GM12878 (cell line): ENCODE measurements at regions of chr2 and their contacts with region 1.

Region 1: DNA sequence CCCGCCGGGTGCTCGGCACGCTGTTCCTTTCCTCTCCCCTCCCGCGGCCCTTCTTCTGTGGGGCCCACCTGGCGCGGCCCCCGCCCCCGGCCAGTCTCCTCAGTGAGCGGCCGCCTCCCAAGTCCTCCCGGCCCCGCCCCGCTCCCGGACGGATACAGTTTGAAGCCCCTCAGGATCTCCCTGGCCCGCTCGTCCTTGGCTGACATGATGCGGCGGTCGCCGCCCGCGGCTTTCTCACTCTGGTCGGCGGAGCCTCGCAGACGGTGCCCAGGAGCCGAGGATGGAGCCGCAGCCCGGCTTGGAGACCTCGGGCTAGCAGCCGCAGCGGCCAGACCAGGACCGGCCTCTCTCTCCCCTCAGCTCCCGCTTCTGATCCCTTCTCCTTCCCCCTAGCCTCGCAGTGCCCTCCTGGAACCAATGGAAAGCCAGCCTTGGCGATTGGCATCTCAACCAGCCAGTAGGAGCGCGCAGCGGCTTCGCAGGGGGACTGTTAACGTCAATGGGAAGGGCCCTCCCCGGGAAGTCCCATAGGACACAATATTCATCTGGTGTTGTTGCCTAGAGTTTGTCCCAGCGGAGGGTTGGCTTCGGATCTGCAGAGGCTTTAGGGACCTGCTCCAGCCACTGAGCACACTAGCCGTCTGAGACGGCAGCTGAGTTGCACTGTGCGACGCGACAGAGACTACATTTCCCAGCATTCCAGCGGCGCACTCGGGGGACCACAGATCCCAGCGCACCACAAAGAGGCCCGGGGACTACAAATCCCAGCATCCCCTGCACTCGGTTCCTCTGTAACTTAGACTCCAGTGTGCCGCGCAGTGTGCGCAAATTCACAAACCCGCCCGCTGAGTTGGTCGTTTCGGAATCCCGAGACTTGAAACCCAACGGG is at the start of gene PDE6D:
- DNase-seq: peak; percentile 97
- ATAC-seq: peak; percentile 94
- H3K4me3 ChIP-seq: peak within 1 kb of the TSS; percentile 91
- H3K27ac ChIP-seq: peak within 1 kb of the TSS; percentile 78
- H3K4me1 ChIP-seq: peaks cover 10% of the 10 kb centered on the region
- H3K27me3 ChIP-seq: no peaks in the 10 kb centered on the region
- CTCF ChIP-seq: no peak
- EP300 ChIP-seq: peak; percentile 22 to 55; a peak in 2 of 4 replicates
- POLR2A ChIP-seq: peak; percentile 93
- RAD21 ChIP-seq: no peak
- polyA plus RNA-seq, gene PDE6D: 8.2 to 15.9 TPM

Region 2: DNA sequence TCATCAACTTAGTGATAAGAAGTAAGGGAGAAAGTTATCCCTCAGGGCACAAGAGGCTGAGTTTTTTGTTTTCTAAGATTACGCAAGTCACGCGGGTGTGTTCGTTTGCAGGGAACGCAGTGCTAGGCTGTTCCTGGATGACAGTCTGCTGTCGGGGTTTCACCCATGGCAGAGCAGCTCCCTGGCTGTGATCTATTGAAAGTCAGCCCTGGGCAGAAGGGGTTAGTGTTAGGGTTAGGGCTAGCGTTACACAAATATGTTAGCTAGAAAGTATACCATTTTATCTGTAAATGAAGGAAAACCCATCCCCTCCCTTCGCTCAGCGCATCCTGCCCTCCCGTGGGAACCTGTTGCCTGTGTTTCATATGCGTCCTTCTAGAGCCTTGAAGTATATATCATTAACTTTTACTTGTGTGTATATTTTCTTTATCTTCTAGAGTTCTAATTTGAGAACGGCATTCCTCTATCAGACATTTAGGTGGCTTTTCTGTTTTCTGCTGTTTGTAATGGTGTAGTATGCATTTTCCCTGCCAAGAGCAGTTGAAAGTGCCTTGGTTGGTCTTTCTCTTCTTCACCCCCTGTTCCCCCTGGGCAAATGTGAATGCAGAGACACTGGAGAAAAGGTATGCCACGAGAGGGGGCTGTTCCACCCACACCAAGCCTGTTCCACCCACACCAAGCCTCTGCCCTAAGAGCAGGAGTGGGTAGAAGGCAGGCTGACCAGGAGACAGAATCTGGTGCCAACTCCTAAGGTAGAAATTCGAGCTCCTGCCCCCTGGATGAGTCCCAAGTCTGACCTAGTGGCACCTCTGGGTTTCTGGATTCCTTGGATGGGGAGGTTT is 535.7 kb before region 1 on chr2:
- CTCF ChIA-PET with region 1: no interaction called
- POLR2A ChIA-PET with region 1: no interaction called
- RAD21 ChIA-PET with region 1: no interaction called
- SMC1A ChIA-PET with region 1: no interaction called
- in situ Hi-C with region 1: no loop called
- intact Hi-C with region 1: no loop called
- DNase-seq: no peak
- ATAC-seq: peak; percentile 85
- H3K4me3 ChIP-seq: no peak overlapping the region
- H3K27ac ChIP-seq: no peak overlapping the region
- H3K4me1 ChIP-seq: no peaks in the 10 kb centered on the region
- H3K27me3 ChIP-seq: no peaks in the 10 kb centered on the region
- CTCF ChIP-seq: peak in 2 of 3 experiments; percentile 31 to 48; a peak in 3 of 6 replicates
- EP300 ChIP-seq: no peak
- POLR2A ChIP-seq: no peak
- RAD21 ChIP-seq: peak; percentile 30; the same call in 1 of the 2 replicates

Region 3: DNA sequence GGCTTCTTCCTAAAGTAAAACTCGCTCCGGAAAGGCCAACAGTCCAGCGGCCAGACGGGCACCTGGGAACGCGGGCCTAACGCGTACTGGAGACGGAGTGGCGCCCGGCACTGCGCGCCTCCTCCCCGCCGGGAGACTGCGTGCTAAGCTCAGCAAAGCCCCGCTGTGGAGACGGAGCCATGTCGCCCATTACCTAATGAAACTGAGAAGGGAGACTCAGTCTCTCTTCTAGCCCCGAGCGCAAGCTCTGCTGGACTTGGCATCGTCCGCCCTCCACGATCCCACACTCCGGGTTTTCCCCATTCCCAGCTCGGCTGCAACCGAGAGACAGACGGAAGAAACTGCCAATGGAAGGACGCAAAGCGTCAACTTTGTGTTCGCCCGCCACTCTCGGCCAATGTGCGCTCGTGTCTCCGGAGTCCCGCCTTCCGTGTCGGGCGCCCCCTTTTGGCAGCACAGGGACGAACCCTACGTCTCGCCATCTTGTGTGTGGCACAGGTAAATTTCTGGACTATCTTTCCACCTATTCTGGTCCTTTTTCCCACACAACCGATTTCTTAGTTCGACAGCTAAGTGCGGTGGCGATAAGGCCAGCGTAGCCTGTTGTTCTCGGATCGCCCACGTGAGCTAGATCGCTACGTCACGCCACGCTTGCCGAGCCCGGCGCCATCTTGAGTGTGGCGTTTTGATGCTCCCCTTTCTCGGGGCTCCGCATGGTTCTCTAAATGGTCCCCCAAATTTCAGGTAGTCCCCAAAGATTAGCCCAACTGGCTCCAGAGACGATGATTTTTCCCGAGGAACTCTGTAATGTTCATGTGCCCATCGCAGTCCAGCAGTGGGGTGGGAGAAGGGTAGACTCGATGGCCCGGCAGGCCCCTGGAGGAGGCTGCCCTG is 74.2 kb before region 1 on chr2:
- CTCF ChIA-PET with region 1: interaction called, 4 read pairs
- POLR2A ChIA-PET with region 1: interaction called, 4 read pairs
- RAD21 ChIA-PET with region 1: interaction called, 3 read pairs
- SMC1A ChIA-PET with region 1: interaction called, 4 read pairs
- in situ Hi-C with region 1: no loop called
- intact Hi-C with region 1: loop called (anchors 1 kb)
- DNase-seq: peak; percentile 95
- ATAC-seq: peak; percentile 61
- H3K4me3 ChIP-seq: peak overlapping the region; percentile 91
- H3K27ac ChIP-seq: peak overlapping the region; percentile 100
- H3K4me1 ChIP-seq: peaks cover 14% of the 10 kb centered on the region
- H3K27me3 ChIP-seq: no peaks in the 10 kb centered on the region
- CTCF ChIP-seq: peak; percentile 91 to 99 (median 99); a peak in 5 of 6 replicates
- EP300 ChIP-seq: no peak
- POLR2A ChIP-seq: no peak
- RAD21 ChIP-seq: no peak

Region 4: GRCh38 chr2:231720987-231721966 is 59.9 kb before region 1 on chr2:
- CTCF ChIA-PET with region 1: no interaction called
- POLR2A ChIA-PET with region 1: interaction called, 7 read pairs
- RAD21 ChIA-PET with region 1: interaction called, 10 read pairs
- SMC1A ChIA-PET with region 1: interaction called, 8 read pairs
- in situ Hi-C with region 1: no loop called
- intact Hi-C with region 1: loop called (anchors 2 kb)
- DNase-seq: peak; percentile 80
- ATAC-seq: peak; percentile 93
- H3K4me3 ChIP-seq: no peak overlapping the region
- H3K27ac ChIP-seq: peak overlapping the region; percentile 71
- H3K4me1 ChIP-seq: peaks cover 26% of the 10 kb centered on the region
- H3K27me3 ChIP-seq: no peaks in the 10 kb centered on the region
- CTCF ChIP-seq: peak; percentile 23 to 43 (median 28); a peak in 4 of 6 replicates
- EP300 ChIP-seq: peak in 1 of 2 experiments; percentile 52; a peak in 1 of 4 replicates
- POLR2A ChIP-seq: peak; percentile 39; the same call in 1 of the 2 replicates
- RAD21 ChIP-seq: 0 out of 2 replicates have a peak, but pooled peaks have one; percentile 42

Region 5: DNA sequence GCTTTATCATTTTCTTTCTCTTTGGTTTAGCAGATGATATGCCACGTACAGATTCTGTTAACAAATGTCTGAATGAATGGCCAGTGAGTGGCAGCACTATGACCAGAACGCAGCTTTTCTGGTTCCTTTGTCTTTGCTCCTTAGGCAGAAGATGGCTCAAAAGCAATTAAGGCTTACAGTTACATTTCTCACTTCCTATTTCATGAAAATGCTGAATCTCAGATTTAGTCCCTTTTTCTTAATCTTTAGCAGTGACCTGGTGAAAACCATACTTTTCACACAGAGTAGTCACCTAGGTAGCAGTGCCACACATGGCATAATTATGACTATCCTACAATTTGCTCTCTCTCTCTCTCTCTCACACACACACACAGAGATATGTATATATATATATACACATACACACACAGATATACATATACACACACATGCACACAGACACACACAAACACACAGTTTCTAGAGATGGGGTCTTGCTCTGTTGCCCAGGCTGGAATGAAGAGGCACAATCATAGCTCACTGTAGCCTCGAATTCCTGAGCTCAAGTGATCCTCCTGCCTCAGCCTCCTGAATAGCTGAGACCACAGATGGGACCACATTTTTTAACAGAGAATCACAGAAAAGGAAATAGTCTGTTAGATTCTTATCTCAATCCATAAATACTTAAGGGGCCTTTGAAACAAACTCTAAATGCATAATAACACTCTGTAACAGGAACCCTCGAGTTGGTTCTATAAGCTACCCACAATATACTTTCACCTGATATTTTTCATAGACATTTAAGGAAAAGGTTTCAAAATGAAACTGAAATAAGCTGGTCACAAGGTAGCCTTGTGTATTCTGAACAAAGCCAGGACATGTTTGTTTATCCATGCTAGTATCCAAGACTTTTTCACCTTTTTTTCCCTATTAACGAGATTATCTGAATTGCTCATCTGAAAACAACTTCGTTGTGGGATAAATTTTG is 11.7 kb before region 1 on chr2:
- CTCF ChIA-PET with region 1: interaction called, 20 read pairs
- POLR2A ChIA-PET with region 1: interaction called, 9 read pairs
- RAD21 ChIA-PET with region 1: interaction called, 8 read pairs
- SMC1A ChIA-PET with region 1: interaction called, 19 read pairs
- in situ Hi-C with region 1: no loop called
- intact Hi-C with region 1: loop called (anchors 1 kb)
- DNase-seq: peak; percentile 51
- ATAC-seq: peak; percentile 81
- H3K4me3 ChIP-seq: peak overlapping the region; percentile 16; the same call in 1 of the 2 replicates
- H3K27ac ChIP-seq: peak overlapping the region; percentile 76
- H3K4me1 ChIP-seq: peaks cover 32% of the 10 kb centered on the region
- H3K27me3 ChIP-seq: no peaks in the 10 kb centered on the region
- CTCF ChIP-seq: peak in 1 of 3 experiments; percentile 30; a peak in 2 of 6 replicates
- EP300 ChIP-seq: peak in 1 of 2 experiments; percentile 38; a peak in 1 of 4 replicates
- POLR2A ChIP-seq: no peak
- RAD21 ChIP-seq: peak; percentile 29; the same call in 1 of the 2 replicates

Region 6: GRCh38 chr2:232113821-232114220 is 332.7 kb after region 1 on chr2:
- CTCF ChIA-PET with region 1: no interaction called
- POLR2A ChIA-PET with region 1: no interaction called
- RAD21 ChIA-PET with region 1: no interaction called
- SMC1A ChIA-PET with region 1: no interaction called
- in situ Hi-C with region 1: no loop called
- intact Hi-C with region 1: no loop called
- DNase-seq: no peak
- ATAC-seq: no peak
- H3K4me3 ChIP-seq: no peak overlapping the region
- H3K27ac ChIP-seq: no peak overlapping the region
- H3K4me1 ChIP-seq: no peaks in the 10 kb centered on the region
- H3K27me3 ChIP-seq: no peaks in the 10 kb centered on the region
- CTCF ChIP-seq: no peak
- EP300 ChIP-seq: no peak
- POLR2A ChIP-seq: no peak
- RAD21 ChIP-seq: no peak